ENCODE measurements at regions of chr20 and their contacts with region 1.

Region 1: DNA sequence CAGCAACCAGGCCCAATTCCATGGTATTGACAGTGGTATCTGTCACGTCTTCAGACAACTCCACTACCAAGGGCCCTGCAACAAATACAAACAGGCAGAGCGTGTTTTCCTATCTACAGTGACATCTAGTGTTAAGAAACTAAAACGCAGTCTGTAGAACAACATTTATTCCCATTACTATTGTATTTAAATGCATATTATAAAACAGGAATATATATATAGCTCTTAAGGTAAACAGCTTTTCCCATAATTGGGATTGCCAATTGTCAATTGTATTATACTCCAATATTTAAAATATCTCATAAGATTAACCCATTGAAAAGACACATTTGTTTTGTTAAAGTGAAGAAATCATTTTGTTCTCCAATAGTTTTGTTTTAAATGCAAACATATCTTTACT is 97.2 kb downstream of the KIF16B start:
- DNase-seq: peak; percentile 61
- H3K4me3 ChIP-seq: no peak overlapping the region
- H3K27ac ChIP-seq: no peak overlapping the region
- H3K4me1 ChIP-seq: peaks cover 4% of the 10 kb centered on the region
- CTCF ChIP-seq: peak; percentile 90

Region 2: DNA sequence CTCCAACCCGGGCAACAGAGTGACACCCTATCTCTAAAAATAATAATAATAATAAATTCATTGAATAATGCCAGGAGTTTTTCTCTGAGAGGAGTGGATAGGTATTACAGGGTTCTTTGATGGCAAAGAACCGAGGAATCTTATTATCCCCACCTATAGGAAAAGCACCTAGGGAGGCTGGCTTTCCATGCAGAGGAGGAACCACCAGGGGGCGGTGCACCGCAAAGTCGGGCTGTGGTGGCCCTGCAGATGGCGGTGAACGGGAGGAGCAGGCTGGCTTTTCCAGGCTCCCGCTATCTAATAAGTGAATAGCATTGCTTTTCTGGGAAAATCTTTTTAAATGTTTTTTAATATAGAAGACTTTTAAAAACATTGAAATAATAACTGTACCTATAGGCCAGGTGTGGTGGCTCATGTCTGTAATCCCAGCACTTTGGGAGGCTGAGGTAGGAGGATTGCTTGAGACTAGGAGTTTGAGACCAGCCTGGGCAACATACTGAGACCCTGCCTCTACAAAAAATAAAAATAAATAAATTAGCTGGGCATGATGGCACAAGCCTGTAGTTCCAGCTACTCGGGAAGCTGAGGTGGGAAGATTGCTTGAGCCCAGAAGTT is 766.9 kb before region 1 on chr20:
- CTCF ChIA-PET with region 1: no interaction called
- POLR2A ChIA-PET with region 1: interaction called, 3 read pairs
- intact Hi-C with region 1: loop called (anchors 5 kb)
- DNase-seq: peak; percentile 41
- H3K4me3 ChIP-seq: no peak overlapping the region
- H3K27ac ChIP-seq: no peak overlapping the region
- H3K4me1 ChIP-seq: no peaks in the 10 kb centered on the region
- CTCF ChIP-seq: peak; percentile 78

Region 3: GRCh38 chr20:16444057-16444777 is 31.8 kb before region 1 on chr20:
- CTCF ChIA-PET with region 1: no interaction called
- POLR2A ChIA-PET with region 1: no interaction called
- intact Hi-C with region 1: no loop called
- DNase-seq: no peak
- H3K4me3 ChIP-seq: no peak overlapping the region
- H3K27ac ChIP-seq: no peak overlapping the region
- H3K4me1 ChIP-seq: no peaks in the 10 kb centered on the region
- CTCF ChIP-seq: no peak

Measured in OCI-LY7 (cell line).